Left colon (tissue), 2 donors: ENCODE measurements at regions of chr1 and their contacts with region 1.

Region 1: GRCh38 chr1:54397090-54397591 is 9.1 kb downstream of the SSBP3 start:
- DNase-seq: no peak
- ATAC-seq: peak; percentile 29

Region 2: GRCh38 chr1:54218883-54219687 is 178.1 kb before region 1 on chr1:
- intact Hi-C with region 1: loop called in 1 of 2 experiments (anchors 10 kb)
- DNase-seq: peak in 1 of 2 donors; percentile 52
- ATAC-seq: peak; percentile 76

Region 3: DNA sequence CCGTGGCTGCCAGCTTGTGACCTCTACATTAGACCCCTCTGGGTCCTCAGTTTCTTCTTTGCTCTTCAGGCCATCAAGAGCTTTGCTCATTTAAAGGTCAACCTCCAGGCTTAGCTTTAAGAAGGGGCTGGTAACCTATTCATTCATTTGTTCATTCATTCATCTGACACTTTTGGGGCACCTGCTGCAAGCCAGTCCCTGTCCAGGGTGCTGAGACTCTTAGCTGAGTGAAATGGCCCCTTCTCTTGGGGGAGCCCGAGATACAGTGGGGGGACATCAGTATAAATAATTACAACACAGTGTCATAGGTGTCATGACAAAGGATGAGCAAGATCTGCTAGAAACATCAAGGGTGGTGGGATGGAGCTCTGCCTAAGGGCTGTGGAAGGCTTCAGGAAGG is 308.0 kb after region 1 on chr1:
- intact Hi-C with region 1: no loop called
- DNase-seq: no peak
- ATAC-seq: no peak